Ovary (tissue), 10 donors: ENCODE measurements at regions of chr16 and their contacts with region 1.

Region 1: DNA sequence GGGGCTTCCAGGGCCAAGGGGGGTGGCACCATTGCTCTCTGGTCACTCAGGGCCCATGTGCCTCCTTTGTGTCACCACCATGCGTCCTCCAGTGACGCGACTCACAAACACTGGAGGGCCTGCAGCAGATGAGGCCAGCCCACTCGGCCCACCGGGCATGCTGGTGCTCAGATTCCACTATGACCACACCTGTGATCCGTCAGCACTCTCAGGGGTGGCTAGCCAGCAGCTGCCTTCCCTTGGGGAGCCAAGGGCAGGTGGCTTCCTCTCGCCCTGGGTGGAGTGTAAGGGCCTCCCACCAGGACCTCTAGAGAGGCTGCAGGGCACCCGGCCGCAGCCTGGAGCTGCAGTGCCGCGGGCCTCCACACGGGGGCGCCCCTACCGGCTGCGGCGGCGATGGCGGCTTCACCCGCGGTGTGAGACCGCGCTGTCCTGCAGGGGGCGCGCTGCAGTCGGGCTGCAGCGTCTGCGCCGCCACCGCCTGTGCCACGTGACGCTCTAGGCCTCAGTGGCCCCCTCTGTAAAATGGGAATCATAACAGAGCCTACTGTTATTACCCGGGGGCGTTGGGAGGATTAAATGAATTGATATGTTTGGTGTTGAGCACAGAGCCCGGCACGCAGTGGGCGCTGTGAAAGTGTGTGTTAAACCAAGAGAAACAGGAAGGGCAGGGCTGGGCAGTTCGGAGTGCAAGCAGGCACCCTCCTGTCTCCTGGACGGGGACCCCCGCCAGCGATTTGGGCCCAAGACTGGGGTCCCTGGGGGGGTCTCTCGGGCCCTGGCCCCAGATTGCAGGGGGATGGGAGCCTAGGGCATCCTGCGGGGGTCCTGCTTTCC is 192.4 kb upstream of the GSE1 start:
- DNase-seq: peak; percentile 41 to 80 (median 64)
- H3K4me3 ChIP-seq: no peak overlapping the region
- H3K27ac ChIP-seq: no peak overlapping the region
- H3K4me1 ChIP-seq: no peaks in the 10 kb centered on the region
- H3K27me3 ChIP-seq: no peaks in the 10 kb centered on the region
- CTCF ChIP-seq: peak; percentile 87 to 100 (median 97)
- EP300 ChIP-seq: no peak
- POLR2A ChIP-seq: no peak

Region 2: GRCh38 chr16:85369741-85370528 is 50.8 kb before region 1 on chr16:
- intact Hi-C with region 1: no loop called
- DNase-seq: no peak
- H3K4me3 ChIP-seq: no peak overlapping the region
- H3K27ac ChIP-seq: no peak overlapping the region
- H3K4me1 ChIP-seq: peaks cover 14% of the 10 kb centered on the region
- H3K27me3 ChIP-seq: no peaks in the 10 kb centered on the region
- CTCF ChIP-seq: peak in 1 of 3 donors; percentile 14
- EP300 ChIP-seq: no peak
- POLR2A ChIP-seq: no peak

Region 3: DNA sequence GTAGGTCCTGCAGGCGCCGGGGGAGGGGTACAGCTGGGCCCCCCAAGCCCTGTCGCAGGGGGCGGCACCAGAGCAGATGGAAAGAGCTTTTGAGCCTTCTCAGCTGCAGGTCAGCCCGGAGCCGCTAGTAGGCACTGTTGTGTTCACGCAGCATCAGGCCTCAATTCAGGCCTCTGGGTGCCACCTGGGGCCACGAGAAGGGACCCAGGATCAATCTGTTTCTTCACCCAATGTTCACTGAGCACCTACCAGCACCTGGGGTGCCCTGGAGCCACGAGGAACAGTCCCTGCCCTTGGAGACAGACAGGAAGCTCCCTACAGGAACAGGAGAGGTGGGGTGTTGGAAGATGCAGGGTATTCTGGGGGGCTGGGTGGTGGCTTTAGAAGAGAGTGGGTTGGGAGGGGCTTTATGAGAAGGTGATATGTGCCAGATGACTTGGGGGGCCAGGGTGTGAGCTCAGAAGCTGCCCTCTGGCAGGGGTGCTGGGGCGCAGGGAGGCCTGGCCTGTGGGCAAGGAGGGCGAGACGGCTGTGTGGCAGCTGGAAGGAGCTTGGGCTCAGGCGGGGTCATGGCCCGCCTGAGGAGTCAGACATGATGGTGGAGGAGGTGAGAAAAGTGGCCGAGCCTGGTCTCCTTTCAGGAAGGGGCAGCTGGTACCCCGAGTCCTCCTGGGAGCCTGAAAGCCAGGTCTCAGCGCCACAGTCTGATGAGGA is 70.5 kb after region 1 on chr16:
- intact Hi-C with region 1: loop called in 1 of 4 experiments (anchors 5 kb)
- DNase-seq: no peak
- H3K4me3 ChIP-seq: no peak overlapping the region
- H3K27ac ChIP-seq: no peak overlapping the region
- H3K4me1 ChIP-seq: peaks cover 13% of the 10 kb centered on the region
- H3K27me3 ChIP-seq: no peaks in the 10 kb centered on the region
- CTCF ChIP-seq: no peak
- EP300 ChIP-seq: no peak
- POLR2A ChIP-seq: no peak

Region 4: GRCh38 chr16:85554112-85554813 is 133.5 kb after region 1 on chr16:
- intact Hi-C with region 1: loop called in 2 of 4 experiments (anchors 10 kb)
- DNase-seq: peak in 4 of 5 donors; percentile 50 to 68 (median 62)
- H3K4me3 ChIP-seq: peak overlapping the region; percentile 67
- H3K27ac ChIP-seq: peak overlapping the region; percentile 26 to 38
- H3K4me1 ChIP-seq: peaks cover 8% of the 10 kb centered on the region
- H3K27me3 ChIP-seq: no peaks in the 10 kb centered on the region
- CTCF ChIP-seq: no peak
- EP300 ChIP-seq: no peak
- POLR2A ChIP-seq: peak; percentile 7